Naive thymus-derived CD4-positive, alpha-beta T cell (primary cell): ENCODE measurements at regions of chr1 and their contacts with region 1.

Region 1: DNA sequence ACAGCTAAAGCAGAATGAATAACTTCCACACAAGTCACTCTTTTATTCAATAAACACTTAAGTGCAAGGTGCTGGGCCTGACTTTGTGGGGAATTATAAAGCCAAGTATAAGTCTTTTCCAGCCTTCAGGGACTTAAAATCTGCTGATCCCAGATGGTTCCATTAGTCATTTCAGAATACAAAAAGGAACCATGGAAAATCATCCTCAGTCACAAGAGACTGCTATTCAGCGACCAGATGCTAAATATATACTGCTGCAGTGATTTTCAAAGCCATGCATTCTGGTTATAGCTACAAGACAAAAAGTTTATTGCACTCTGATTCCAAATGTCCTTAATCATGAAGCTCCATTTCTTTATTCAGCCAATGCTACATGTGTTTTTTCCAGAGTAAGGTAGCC is 25.7 kb downstream of the GLMN start:
- DNase-seq: no peak
- ATAC-seq: no peak
- H3K4me3 ChIP-seq: no peak overlapping the region
- H3K4me3 Mint-ChIP-seq: no peak overlapping the region
- H3K27ac ChIP-seq: no peak overlapping the region
- H3K27ac Mint-ChIP-seq: no peak overlapping the region
- H3K4me1 ChIP-seq: no peaks in the 10 kb centered on the region
- H3K4me1 Mint-ChIP-seq: peaks cover 0 to 19% (median 5%) of the 10 kb centered on the region in 7 donors
- H3K27me3 ChIP-seq: no peaks in the 10 kb centered on the region
- H3K27me3 Mint-ChIP-seq: no peaks in the 10 kb centered on the region

Region 2: DNA sequence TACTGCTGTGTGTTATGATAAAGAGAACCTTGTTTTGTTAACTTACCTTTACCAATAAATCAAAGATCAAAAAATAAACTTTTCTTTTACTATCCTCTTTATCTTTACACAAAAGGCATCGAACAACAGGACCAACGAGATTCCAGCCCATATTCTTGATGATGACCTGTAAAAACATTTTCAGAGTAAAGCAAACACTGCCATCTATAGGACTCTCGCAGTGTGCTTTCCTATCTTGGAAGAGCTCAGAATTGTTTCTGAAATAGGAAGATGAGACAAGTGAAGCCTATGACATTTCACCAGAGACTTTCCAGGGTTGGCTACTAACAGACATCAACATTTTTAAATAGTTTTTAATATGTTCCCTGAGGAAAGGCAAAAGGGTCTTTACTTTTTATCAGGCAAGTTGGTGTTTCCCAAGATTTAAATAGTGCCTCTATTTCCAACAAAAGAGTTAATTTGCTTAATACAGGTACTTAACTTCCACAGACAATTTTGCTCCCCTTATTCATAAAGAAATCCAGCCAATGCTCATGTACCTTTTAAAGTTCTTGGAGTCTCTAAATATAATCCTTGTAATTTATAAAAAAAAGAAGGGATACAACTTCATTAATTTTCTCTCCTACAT is 18.4 kb after region 1 on chr1:
- CTCF ChIA-PET with region 1: interaction called, 5 read pairs
- POLR2A ChIA-PET with region 1: no interaction called
- intact Hi-C with region 1: loop called in 1 of 2 experiments (anchors 2 kb)
- DNase-seq: peak in 4 of 9 donors; percentile 5 to 45 (median 41)
- ATAC-seq: peak; percentile 65
- H3K4me3 ChIP-seq: no peak overlapping the region
- H3K4me3 Mint-ChIP-seq: no peak overlapping the region
- H3K27ac ChIP-seq: no peak overlapping the region
- H3K27ac Mint-ChIP-seq: no peak overlapping the region
- H3K4me1 ChIP-seq: no peaks in the 10 kb centered on the region
- H3K4me1 Mint-ChIP-seq: peaks cover 18 to 31% (median 24%) of the 10 kb centered on the region in 7 donors
- H3K27me3 ChIP-seq: no peaks in the 10 kb centered on the region
- H3K27me3 Mint-ChIP-seq: no peaks in the 10 kb centered on the region